ENCODE measurements at regions of chr4 and their contacts with region 1.

Region 1: DNA sequence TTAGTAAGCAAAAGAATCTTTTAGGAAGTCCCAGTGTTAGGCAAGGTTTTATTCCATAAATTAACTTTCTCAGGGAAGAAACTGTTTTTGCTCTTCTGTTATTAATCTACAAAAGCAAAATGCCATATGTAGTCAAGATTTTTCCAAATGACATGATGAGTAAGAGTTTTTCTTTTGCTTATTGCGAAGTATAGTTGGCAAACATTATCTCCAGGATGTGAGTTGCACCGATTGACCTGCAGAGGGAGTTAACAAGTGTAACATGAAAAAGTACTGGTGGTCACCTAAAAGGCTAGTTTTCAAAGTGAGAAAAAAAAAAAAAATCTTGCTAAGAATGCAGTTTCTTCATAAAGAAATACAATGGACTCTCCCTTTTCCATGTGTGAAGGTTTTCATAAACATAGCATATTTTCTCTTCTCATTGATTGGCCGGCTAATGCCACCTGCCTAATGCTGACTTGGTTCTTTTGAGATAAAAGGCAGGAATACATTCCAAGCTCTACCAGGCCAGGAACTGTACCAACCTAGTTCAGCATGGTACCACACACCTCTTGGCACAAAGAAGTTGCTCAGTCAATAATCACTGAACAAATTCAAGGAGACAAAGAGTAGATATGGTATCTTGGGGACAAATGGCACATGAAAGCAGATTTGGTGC is 100.2 kb downstream of the LNX1 start:
- DNase-seq: peak; percentile 83
- H3K4me3 ChIP-seq: no peak overlapping the region
- CTCF ChIP-seq: peak; percentile 74

Region 2: DNA sequence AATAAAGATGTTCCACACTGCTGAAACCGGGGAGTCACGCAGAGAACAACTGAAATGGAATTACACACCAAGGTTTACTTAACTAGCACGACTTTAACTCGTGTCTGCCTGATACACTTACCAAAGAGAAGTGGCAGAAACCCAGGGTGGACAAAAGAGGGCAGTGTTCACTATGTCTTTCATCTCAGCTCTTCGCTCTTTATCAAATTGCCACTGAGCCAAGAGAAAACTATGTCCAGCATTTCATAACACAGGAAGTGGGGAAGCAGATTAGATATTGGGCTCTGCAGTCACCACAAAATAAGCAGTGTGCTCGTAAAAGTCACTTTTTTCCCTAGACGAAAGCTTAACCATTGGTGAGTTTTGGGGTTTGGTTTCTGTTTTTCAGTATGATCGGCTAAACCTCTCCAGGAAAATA is 417.6 kb after region 1 on chr4:
- in situ Hi-C with region 1: loop called (anchors 25 kb)
- DNase-seq: peak; percentile 89
- H3K4me3 ChIP-seq: peak overlapping the region; percentile 6
- CTCF ChIP-seq: peak; percentile 78

Region 3: DNA sequence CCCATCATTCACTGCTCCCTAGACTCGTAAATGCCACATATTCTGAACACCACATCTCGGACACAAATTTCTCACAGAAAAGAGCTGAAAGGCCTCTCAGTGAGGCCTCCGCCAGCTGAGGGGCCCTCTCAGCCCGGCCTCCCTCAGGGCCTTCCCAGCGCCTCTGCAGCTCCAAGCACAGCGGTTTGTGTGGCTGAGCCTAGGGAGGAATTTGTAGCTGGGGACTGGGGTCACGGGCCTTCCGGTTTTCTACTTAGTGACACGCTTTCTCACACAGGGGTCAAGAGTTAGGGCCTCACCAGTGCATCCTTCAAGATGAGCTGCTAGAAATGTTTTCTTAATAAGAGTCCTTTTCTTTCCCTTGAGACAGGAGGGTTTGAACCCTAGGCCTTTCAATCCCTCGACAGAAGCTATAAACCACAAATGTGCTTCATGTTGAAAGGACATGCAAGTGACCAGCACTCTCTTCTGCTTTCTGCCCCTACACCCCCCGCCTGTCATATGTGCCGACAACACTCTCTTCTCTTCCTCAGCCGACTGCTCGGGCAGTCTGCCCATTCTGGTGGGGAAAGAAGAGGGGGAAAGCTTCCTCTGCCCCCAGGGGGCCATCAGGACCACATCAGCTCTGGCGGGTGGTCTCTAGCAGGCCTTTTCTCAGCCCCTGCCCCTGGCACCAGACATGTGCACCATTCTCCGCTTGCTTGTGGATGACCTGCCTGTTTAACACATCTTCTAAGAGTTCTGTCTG is 468.5 kb after region 1 on chr4:
- in situ Hi-C with region 1: no loop called
- DNase-seq: no peak
- H3K4me3 ChIP-seq: no peak overlapping the region
- CTCF ChIP-seq: no peak

Measured in astrocyte of the spinal cord (primary cell).